Astrocyte of the cerebellum (primary cell): ENCODE measurements at regions of chr1 and their contacts with region 1.

Region 1: GRCh38 chr1:27413004-27413403 is 20.6 kb downstream of the GPR3 start:
- DNase-seq: no peak
- H3K4me3 ChIP-seq: no peak overlapping the region
- CTCF ChIP-seq: no peak

Region 2: DNA sequence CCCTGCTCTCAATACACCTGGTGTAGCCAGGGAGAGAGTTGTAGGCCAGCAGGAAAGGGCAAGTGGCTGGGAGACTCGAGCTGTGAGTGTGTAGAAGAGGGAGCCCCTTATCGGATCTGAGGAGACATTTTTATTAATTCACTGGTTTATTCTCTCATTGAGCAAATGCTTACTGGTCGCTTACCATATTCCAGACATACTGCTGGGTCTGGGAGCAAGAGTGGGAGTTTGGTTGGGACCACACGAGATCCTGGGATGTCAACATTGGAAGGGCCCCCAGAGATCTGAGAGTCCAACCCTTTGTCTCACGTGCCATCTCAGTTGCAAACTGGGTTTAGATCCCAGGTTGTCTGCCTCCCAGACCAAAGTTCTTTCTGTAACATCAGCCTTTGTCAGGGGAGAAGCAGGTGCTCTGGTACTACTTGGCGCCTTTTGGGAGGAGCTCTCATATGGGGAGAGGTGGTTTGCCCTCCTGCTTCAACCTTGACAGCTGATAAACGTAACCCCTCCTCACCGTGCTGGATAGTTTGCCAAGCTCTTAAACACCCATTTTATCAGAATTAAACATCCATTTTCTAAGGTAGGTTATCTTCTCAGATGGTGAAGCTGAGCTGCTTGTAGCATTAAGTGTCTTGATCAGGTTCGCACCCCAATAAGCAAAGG is 90.3 kb before region 1 on chr1:
- in situ Hi-C with region 1: no loop called
- DNase-seq: no peak
- H3K4me3 ChIP-seq: peak overlapping the region; percentile 100
- CTCF ChIP-seq: no peak

Region 3: GRCh38 chr1:27616441-27616840 is 203.4 kb after region 1 on chr1:
- in situ Hi-C with region 1: loop called (anchors 5 kb)
- DNase-seq: no peak
- H3K4me3 ChIP-seq: no peak overlapping the region
- CTCF ChIP-seq: no peak